ENCODE measurements at regions of chr16 and their contacts with region 1.

Region 1: GRCh38 chr16:84084570-84085270 is 32.0 kb downstream of the MBTPS1 start:
- DNase-seq: peak; percentile 67 to 83
- ATAC-seq: peak; percentile 87

Region 2: GRCh38 chr16:84062734-84063640 is 21.7 kb before region 1 on chr16:
- intact Hi-C with region 1: no loop called
- DNase-seq: peak; percentile 43 to 73
- ATAC-seq: peak; percentile 88

Region 3: DNA sequence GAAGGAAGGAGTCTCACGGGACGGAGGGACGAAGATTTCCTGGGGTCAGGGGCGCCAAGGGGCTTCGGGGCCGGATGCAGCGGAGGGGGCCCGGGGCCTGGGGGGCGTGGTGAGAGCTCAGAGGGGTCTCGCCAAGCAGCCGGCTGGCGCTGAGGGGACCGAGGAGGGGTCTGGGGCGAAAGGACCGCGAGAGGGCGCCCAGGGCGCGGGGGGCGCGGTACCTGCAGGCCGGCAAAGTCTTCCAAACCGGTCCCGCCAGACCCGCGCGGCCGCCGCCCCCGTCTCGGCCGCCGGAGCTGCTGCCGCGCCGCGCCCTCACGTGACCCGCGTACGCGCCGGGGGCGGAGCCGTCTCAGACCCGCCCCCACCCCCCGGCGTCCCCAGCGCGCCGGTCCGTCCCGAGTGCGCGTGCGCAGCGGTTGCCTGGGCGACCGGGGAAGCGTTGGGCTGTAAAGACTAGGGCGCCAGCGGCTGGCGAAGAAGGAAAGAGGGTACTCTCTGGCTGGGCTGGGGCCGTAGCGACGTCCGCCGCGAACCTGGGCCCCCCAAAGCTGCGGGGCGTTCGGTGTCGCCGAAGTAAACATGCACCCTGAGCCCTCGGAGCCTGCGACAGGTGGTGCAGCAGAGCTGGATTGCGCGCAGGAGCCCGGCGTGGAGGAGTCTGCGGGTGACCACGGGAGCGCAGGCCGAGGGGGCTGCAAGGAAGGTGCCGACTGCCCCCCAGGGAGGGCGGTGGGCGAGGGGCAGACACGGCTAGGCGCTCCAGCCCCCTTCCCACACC is 60.3 kb after region 1 on chr16 and contains the starts of genes DNAAF1 and HSDL1:
- intact Hi-C with region 1: no loop called
- DNase-seq: peak; percentile 83 to 91
- ATAC-seq: peak; percentile 97
- total RNA-seq, gene DNAAF1: 0.09 to 0.34 TPM
- total RNA-seq, gene HSDL1: 11.5 to 13.2 TPM

Region 4: GRCh38 chr16:84186685-84187437 is 102.1 kb after region 1 on chr16 and contains the start of gene TAF1C:
- intact Hi-C with region 1: loop called in 1 of 2 experiments (anchors 10 kb)
- DNase-seq: peak; percentile 88 to 96
- ATAC-seq: peak; percentile 99
- total RNA-seq, gene TAF1C: 33.1 to 36.8 TPM

Measured in left colon (tissue), 2 donors.